ENCODE measurements at regions of chr2 and their contacts with region 1.

Region 1: GRCh38 chr2:63861220-63861822 is 19.6 kb downstream of the UGP2 start:
- DNase-seq: peak; percentile 65 to 73 (median 67)
- H3K4me3 ChIP-seq: no peak overlapping the region
- H3K4me3 Mint-ChIP-seq: no peak overlapping the region
- H3K27ac ChIP-seq: no peak overlapping the region
- H3K27ac Mint-ChIP-seq: peak overlapping the region in 6 of 7 donors; percentile 10 to 78 (median 37)
- H3K4me1 ChIP-seq: peaks cover 23% of the 10 kb centered on the region
- H3K4me1 Mint-ChIP-seq: peaks cover 26 to 40% (median 29%) of the 10 kb centered on the region in 4 donors
- H3K27me3 ChIP-seq: no peaks in the 10 kb centered on the region
- H3K27me3 Mint-ChIP-seq: no peaks in the 10 kb centered on the region

Region 2: GRCh38 chr2:63588385-63589147 is 272.8 kb before region 1 on chr2 and contains the starts of genes MDH1 and WDPCP:
- CTCF ChIA-PET with region 1: interaction called, 8 read pairs
- POLR2A ChIA-PET with region 1: interaction called, 3 read pairs
- intact Hi-C with region 1: loop called (anchors 2 kb)
- DNase-seq: peak; percentile 93 to 99 (median 97)
- H3K4me3 ChIP-seq: peak within 1 kb of the TSS; percentile 78 to 96
- H3K4me3 Mint-ChIP-seq: peak within 1 kb of the TSS; percentile 89 to 96 (median 95)
- H3K27ac ChIP-seq: peak within 1 kb of the TSS; percentile 82
- H3K27ac Mint-ChIP-seq: peak within 1 kb of the TSS; percentile 92 to 99 (median 98)
- H3K4me1 ChIP-seq: peaks cover 32% of the 10 kb centered on the region
- H3K4me1 Mint-ChIP-seq: peaks cover 20 to 54% (median 43%) of the 10 kb centered on the region in 4 donors
- H3K27me3 ChIP-seq: no peaks in the 10 kb centered on the region
- H3K27me3 Mint-ChIP-seq: no peaks in the 10 kb centered on the region
- total RNA-seq, gene MDH1: 93.8 to 102 TPM
- total RNA-seq, gene WDPCP: 10.5 to 13.2 TPM

Region 3: GRCh38 chr2:63692002-63692606 is 169.2 kb before region 1 on chr2:
- CTCF ChIA-PET with region 1: interaction called, 111 read pairs
- POLR2A ChIA-PET with region 1: interaction called, 3 read pairs
- intact Hi-C with region 1: loop called (anchors 1 kb)
- DNase-seq: peak in 4 of 5 donors; percentile 38 to 54 (median 46)
- H3K4me3 ChIP-seq: no peak overlapping the region
- H3K4me3 Mint-ChIP-seq: no peak overlapping the region
- H3K27ac ChIP-seq: no peak overlapping the region
- H3K27ac Mint-ChIP-seq: no peak overlapping the region
- H3K4me1 ChIP-seq: no peaks in the 10 kb centered on the region
- H3K4me1 Mint-ChIP-seq: peaks cover 0 to 1% (median 0%) of the 10 kb centered on the region in 4 donors
- H3K27me3 ChIP-seq: no peaks in the 10 kb centered on the region
- H3K27me3 Mint-ChIP-seq: no peaks in the 10 kb centered on the region

Region 4: GRCh38 chr2:63698825-63699548 is 162.3 kb before region 1 on chr2:
- CTCF ChIA-PET with region 1: interaction called, 111 read pairs
- POLR2A ChIA-PET with region 1: interaction called, 5 read pairs
- intact Hi-C with region 1: loop called (anchors 1 kb)
- DNase-seq: peak in 4 of 5 donors; percentile 15 to 45 (median 30)
- H3K4me3 ChIP-seq: no peak overlapping the region
- H3K4me3 Mint-ChIP-seq: no peak overlapping the region
- H3K27ac ChIP-seq: no peak overlapping the region
- H3K27ac Mint-ChIP-seq: no peak overlapping the region
- H3K4me1 ChIP-seq: no peaks in the 10 kb centered on the region
- H3K4me1 Mint-ChIP-seq: no peaks in the 10 kb centered on the region
- H3K27me3 ChIP-seq: no peaks in the 10 kb centered on the region
- H3K27me3 Mint-ChIP-seq: no peaks in the 10 kb centered on the region

Region 5: DNA sequence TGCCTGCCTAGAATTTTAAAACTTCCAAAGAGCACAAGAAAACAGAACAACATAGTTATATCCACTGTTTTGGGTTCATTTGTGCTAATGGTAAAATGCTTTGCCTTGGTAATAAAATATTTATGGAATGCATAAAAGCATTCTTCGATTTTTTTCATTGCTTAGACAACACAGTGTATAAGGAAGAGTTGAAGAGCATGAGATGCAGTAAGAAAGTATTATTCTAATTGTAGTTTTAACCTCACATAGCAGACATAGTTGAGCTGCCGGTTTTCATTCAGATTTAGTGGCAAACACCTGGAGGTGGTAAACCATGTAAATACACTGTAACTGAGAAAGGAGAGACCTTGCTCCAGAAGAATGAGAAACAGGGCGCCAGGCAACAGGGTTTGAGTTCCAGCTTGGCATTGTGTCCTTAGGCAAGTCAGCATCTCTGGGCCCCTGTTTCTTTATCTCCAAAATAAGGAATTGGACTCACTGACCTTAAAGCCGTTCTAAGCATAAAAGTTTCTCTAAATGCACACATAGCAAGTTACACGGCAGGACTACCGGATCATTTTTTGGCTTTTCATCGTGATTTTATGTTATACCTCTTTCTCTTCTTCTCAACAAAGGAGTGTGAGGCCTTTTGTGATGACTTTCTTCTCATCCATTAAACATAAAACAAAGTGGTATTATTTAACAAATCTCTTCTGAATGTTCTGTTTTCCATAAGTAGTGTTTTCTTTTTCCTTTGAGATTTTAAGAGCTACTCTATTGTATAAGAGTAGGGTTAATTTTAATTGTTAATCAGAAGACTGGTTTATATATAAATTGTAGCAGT is 11.7 kb before region 1 on chr2:
- CTCF ChIA-PET with region 1: interaction called, 27 read pairs
- POLR2A ChIA-PET with region 1: interaction called, 3 read pairs
- intact Hi-C with region 1: no loop called
- DNase-seq: no peak
- H3K4me3 ChIP-seq: no peak overlapping the region
- H3K4me3 Mint-ChIP-seq: peak overlapping the region in 4 of 8 donors; percentile 1 to 67 (median 28)
- H3K27ac ChIP-seq: no peak overlapping the region
- H3K27ac Mint-ChIP-seq: peak overlapping the region in 5 of 7 donors; percentile 62 to 91 (median 82)
- H3K4me1 ChIP-seq: peaks cover 74% of the 10 kb centered on the region
- H3K4me1 Mint-ChIP-seq: peaks cover 60 to 94% (median 75%) of the 10 kb centered on the region in 4 donors
- H3K27me3 ChIP-seq: no peaks in the 10 kb centered on the region
- H3K27me3 Mint-ChIP-seq: no peaks in the 10 kb centered on the region

Region 6: GRCh38 chr2:63875131-63875527 is 13.8 kb after region 1 on chr2:
- CTCF ChIA-PET with region 1: interaction called, 13 read pairs
- POLR2A ChIA-PET with region 1: interaction called, 4 read pairs
- intact Hi-C with region 1: no loop called
- DNase-seq: no peak
- H3K4me3 ChIP-seq: no peak overlapping the region
- H3K4me3 Mint-ChIP-seq: no peak overlapping the region
- H3K27ac ChIP-seq: no peak overlapping the region
- H3K27ac Mint-ChIP-seq: peak overlapping the region in 2 of 7 donors; percentile 14 to 63
- H3K4me1 ChIP-seq: peaks cover 8% of the 10 kb centered on the region
- H3K4me1 Mint-ChIP-seq: peaks cover 31 to 45% (median 37%) of the 10 kb centered on the region in 4 donors
- H3K27me3 ChIP-seq: no peaks in the 10 kb centered on the region
- H3K27me3 Mint-ChIP-seq: no peaks in the 10 kb centered on the region